ENCODE measurements at regions of chr12 and their contacts with region 1.

Region 1: GRCh38 chr12:94149119-94149780 is 873 bp downstream of the PLXNC1 start:
- DNase-seq: peak; percentile 69
- H3K4me3 ChIP-seq: peak overlapping the region; percentile 71
- H3K27ac ChIP-seq: no peak overlapping the region
- H3K4me1 ChIP-seq: peaks cover 19% of the 10 kb centered on the region
- CTCF ChIP-seq: peak; percentile 75

Region 2: DNA sequence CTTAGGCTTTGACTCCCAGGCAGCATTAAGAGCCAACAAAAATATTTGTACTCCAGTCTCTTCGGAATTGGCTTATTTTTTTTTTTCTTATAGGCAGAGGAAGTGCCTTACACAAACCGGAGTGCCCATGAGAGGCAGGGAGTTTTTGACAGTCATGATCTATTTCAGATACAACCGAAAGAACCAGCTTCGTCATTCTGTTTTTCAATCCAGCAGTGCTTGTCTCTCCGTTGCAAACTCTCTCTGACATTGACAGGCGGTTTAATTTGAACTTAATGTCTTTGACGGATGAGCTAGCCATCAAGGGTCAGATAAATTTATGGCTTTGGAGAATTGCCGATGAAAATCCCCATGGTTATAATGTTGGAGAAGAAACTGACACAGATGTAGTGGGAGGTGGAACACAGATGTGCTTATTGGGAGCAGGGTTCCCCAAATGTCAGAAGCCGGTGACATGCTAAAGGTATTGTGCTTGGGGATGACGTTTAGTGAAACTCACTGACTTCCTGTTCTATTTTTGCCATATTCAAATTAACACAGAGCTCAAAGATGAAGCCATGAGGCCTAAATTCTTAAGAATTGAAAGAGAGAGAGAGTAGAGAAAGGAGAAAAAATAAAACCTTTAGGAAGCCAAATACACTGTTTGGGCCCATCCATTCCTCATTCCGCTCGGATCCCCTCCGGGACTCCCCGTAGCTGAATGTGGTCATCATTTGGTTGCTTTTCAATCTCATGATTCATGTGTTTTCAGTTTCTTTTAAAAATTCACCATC is 58.8 kb after region 1 on chr12:
- CTCF ChIA-PET with region 1: no interaction called
- POLR2A ChIA-PET with region 1: interaction called, 3 read pairs
- intact Hi-C with region 1: loop called (anchors 2 kb)
- DNase-seq: peak; percentile 83
- H3K4me3 ChIP-seq: peak overlapping the region; percentile 64
- H3K27ac ChIP-seq: peak overlapping the region; percentile 96
- H3K4me1 ChIP-seq: peaks cover 69% of the 10 kb centered on the region
- CTCF ChIP-seq: no peak

Region 3: DNA sequence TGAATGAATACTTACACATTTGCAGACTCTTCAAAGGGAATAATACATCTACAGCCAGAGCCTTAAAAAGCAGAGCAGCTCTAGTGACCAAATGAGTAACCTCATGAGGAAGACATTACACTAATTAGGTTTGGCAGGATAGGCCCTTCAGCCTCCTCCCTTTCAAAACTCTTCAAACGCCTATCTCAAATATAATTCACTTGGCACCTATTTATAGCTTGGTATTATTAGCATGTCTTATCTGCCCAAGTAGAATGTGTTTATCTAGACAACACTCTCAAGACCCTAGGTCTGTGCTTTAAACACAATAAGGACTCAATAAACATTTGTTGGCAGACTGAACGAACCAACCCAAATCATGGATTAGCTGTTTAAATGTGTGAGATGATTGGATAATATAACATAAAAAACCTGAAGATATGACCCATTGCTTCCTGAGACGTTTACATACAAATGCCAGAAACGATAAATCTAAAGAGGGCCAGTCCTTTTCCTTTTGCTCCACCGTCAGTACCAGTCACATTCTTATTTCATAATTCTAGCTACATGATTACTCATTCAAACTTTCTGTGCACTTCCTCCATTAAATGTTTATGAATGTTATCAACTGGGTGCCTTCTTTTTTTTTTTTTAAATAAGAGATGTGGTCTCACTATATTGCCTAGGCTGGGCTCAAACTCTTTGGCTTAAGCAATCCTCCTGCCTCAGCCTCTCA is 187.1 kb after region 1 on chr12:
- CTCF ChIA-PET with region 1: no interaction called
- POLR2A ChIA-PET with region 1: no interaction called
- intact Hi-C with region 1: loop called (anchors 10 kb)
- DNase-seq: no peak
- H3K4me3 ChIP-seq: no peak overlapping the region
- H3K27ac ChIP-seq: no peak overlapping the region
- H3K4me1 ChIP-seq: no peaks in the 10 kb centered on the region
- CTCF ChIP-seq: no peak

Region 4: GRCh38 chr12:94434171-94434570 is 284.9 kb after region 1 on chr12:
- CTCF ChIA-PET with region 1: no interaction called
- POLR2A ChIA-PET with region 1: no interaction called
- intact Hi-C with region 1: loop called (anchors 5 kb)
- DNase-seq: no peak
- H3K4me3 ChIP-seq: no peak overlapping the region
- H3K27ac ChIP-seq: no peak overlapping the region
- H3K4me1 ChIP-seq: no peaks in the 10 kb centered on the region
- CTCF ChIP-seq: peak; percentile 69

Region 5: GRCh38 chr12:94459728-94460615 is 310.7 kb after region 1 on chr12 and contains the start of gene CEP83:
- CTCF ChIA-PET with region 1: no interaction called
- POLR2A ChIA-PET with region 1: interaction called, 3 read pairs
- intact Hi-C with region 1: loop called (anchors 2 kb)
- DNase-seq: peak; percentile 93
- H3K4me3 ChIP-seq: peak within 1 kb of the TSS; percentile 80
- H3K27ac ChIP-seq: peak within 1 kb of the TSS; percentile 32
- H3K4me1 ChIP-seq: peaks cover 17% of the 10 kb centered on the region
- CTCF ChIP-seq: 0 out of 2 replicates have a peak, but pooled peaks have one; percentile 11
- total RNA-seq, gene CEP83: 24.0 and 35.2 TPM in 2 replicates

Region 6: GRCh38 chr12:95336390-95337067 is 1187.3 kb after region 1 on chr12:
- CTCF ChIA-PET with region 1: no interaction called
- POLR2A ChIA-PET with region 1: no interaction called
- intact Hi-C with region 1: loop called (anchors 5 kb)
- DNase-seq: peak; percentile 89
- H3K4me3 ChIP-seq: peak overlapping the region; percentile 59
- H3K27ac ChIP-seq: peak overlapping the region; percentile 68
- H3K4me1 ChIP-seq: peaks cover 80% of the 10 kb centered on the region
- CTCF ChIP-seq: peak; percentile 98

Measured in OCI-LY7 (cell line).